Activated B cell treated with CpG ODN at 0.5 μM for 24 hours (primary cell): ENCODE measurements at regions of chr12 and their contacts with region 1.

Region 1: GRCh38 chr12:110449799-110450497 is at the start of gene ARPC3:
- DNase-seq: peak; percentile 92
- ATAC-seq: peak; percentile 92
- H3K4me3 Mint-ChIP-seq: peak within 1 kb of the TSS; percentile 100
- H3K27ac Mint-ChIP-seq: peak within 1 kb of the TSS; percentile 100
- H3K4me1 Mint-ChIP-seq: peaks cover 48% of the 10 kb centered on the region
- H3K27me3 Mint-ChIP-seq: no peaks in the 10 kb centered on the region
- CTCF ChIP-seq: no peak
- total RNA-seq, gene ARPC3: 435 and 459 TPM in 2 replicates

Region 2: DNA sequence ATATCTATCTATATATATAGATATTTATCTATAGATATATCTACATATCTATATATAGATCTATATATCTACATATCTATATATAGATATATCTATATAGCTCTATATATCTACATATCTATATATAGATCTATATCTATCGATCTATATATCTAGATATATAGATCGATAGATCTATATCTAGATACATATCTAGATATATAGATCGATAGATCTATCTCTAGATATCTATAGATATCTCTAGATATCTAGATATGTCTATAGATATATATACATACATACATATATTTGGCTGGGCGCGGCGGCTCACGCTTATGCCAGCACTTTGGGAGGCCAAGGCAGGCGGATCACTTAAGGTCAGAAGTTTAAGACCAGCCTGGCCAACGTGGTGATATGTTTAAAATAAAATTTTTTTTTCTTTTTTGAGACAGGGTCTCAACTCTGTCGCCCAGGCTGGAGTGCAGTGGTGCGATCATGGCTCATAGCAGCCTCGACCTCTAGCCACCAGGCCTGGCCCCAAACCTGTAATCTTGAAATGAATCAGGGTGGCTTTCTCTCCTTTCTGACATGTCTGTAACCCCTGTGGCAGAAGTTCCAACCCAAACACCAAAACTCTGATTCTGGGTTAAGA is 17.9 kb before region 1 on chr12:
- CTCF ChIA-PET with region 1: interaction called, 11 read pairs
- POLR2A ChIA-PET with region 1: interaction called, 28 read pairs
- intact Hi-C with region 1: loop called (anchors 2 kb)
- DNase-seq: no peak
- ATAC-seq: no peak
- H3K4me3 Mint-ChIP-seq: no peak overlapping the region
- H3K27ac Mint-ChIP-seq: no peak overlapping the region
- H3K4me1 Mint-ChIP-seq: peaks cover 2% of the 10 kb centered on the region
- H3K27me3 Mint-ChIP-seq: no peaks in the 10 kb centered on the region
- CTCF ChIP-seq: no peak

Region 3: GRCh38 chr12:110508071-110508586 is 58.2 kb after region 1 on chr12:
- CTCF ChIA-PET with region 1: interaction called, 6 read pairs
- POLR2A ChIA-PET with region 1: interaction called, 6 read pairs
- intact Hi-C with region 1: loop called (anchors 1 kb)
- DNase-seq: no peak
- ATAC-seq: no peak
- H3K4me3 Mint-ChIP-seq: no peak overlapping the region
- H3K27ac Mint-ChIP-seq: no peak overlapping the region
- H3K4me1 Mint-ChIP-seq: peaks cover 2% of the 10 kb centered on the region
- H3K27me3 Mint-ChIP-seq: no peaks in the 10 kb centered on the region
- CTCF ChIP-seq: no peak

Region 4: DNA sequence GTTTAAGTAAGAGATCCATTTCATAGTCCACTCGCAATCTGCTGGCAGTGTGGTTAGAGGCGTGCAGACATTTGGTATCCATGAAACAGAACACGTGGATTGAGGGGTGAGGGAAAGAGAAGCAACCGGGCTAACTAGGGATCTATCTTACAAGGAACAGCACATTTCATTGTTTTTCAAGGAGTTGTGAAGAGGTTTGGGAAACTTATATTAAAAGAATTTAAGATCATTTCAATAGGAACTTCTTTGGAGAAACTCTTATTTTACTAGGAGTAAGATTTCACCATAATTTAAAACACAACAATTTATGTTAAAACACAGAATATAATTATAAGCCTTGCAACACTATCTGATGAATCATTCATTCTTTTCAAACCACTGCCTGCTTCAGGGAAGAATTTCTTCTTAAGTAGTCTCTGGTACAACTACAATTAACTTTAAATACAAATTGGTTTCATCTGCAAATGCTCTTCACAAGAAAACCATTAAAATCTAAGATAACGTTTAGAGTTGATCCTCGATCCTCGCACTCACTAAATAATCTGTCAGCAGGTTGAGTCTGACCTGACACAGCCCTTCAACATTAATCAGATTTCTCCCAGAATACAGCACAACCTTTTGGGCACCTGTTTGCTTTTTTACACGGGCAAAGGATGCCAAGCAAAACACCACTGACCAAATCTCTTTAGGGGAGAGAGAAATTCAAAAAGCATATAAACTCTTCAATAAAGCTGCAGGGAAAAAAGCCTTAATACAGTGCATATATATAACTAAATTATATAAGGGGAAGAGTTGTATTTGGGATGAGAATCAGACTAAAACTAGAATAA is 105.8 kb after region 1 on chr12:
- CTCF ChIA-PET with region 1: interaction called, 13 read pairs
- POLR2A ChIA-PET with region 1: interaction called, 4 read pairs
- intact Hi-C with region 1: loop called (anchors 1 kb)
- DNase-seq: no peak
- ATAC-seq: no peak
- H3K4me3 Mint-ChIP-seq: no peak overlapping the region
- H3K27ac Mint-ChIP-seq: no peak overlapping the region
- H3K4me1 Mint-ChIP-seq: peaks cover 63% of the 10 kb centered on the region
- H3K27me3 Mint-ChIP-seq: no peaks in the 10 kb centered on the region
- CTCF ChIP-seq: no peak

Region 5: DNA sequence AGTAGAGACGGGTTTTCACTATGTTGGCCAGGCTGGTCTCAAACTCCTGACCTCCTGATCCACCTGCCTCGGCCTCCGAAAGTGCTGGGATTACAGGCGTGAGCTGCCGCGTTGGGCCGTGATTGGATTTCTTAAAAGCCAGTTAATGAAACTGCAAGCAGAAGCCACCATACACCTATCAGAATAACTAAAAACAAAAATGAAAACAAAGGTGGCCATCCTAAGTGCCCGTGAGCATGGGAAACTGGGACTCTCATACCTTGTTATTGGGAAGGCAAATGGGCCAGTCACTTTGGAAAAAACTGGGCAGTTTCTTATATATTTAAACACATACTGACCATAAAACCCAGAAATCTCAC is 156.3 kb after region 1 on chr12:
- CTCF ChIA-PET with region 1: interaction called, 189 read pairs
- POLR2A ChIA-PET with region 1: interaction called, 90 read pairs
- intact Hi-C with region 1: loop called (anchors 1 kb)
- DNase-seq: no peak
- ATAC-seq: no peak
- H3K4me3 Mint-ChIP-seq: peak overlapping the region; percentile 85
- H3K27ac Mint-ChIP-seq: peak overlapping the region; percentile 94
- H3K4me1 Mint-ChIP-seq: peaks cover 84% of the 10 kb centered on the region
- H3K27me3 Mint-ChIP-seq: no peaks in the 10 kb centered on the region
- CTCF ChIP-seq: no peak

Region 6: DNA sequence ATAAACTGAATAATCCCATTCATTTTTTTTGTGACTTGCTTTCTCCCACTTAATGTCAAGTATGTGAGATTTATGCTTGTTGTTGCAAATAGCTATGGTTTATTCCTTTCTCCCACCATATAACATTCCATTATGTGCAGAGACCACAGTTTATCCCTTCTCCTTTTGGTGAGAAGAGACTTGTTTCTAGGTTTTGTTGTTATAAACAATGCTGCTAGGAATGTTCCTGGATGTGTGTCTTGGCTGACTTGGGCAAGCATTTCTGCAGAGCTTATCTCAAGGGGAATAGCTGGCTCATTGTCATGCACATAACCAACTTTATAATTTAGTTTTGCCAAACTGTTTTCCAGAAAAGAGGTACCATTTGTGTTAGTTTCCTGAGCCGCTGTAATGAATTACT is 340.4 kb after region 1 on chr12:
- CTCF ChIA-PET with region 1: no interaction called
- POLR2A ChIA-PET with region 1: no interaction called
- intact Hi-C with region 1: no loop called
- DNase-seq: no peak
- ATAC-seq: no peak
- H3K4me3 Mint-ChIP-seq: no peak overlapping the region
- H3K27ac Mint-ChIP-seq: no peak overlapping the region
- H3K4me1 Mint-ChIP-seq: no peaks in the 10 kb centered on the region
- H3K27me3 Mint-ChIP-seq: no peaks in the 10 kb centered on the region
- CTCF ChIP-seq: no peak

Region 7: GRCh38 chr12:110826592-110827200 is 376.7 kb after region 1 on chr12:
- CTCF ChIA-PET with region 1: interaction called, 34 read pairs
- POLR2A ChIA-PET with region 1: interaction called, 10 read pairs
- intact Hi-C with region 1: loop called (anchors 1 kb)
- DNase-seq: peak; percentile 74
- ATAC-seq: peak; percentile 99
- H3K4me3 Mint-ChIP-seq: peak overlapping the region; percentile 80
- H3K27ac Mint-ChIP-seq: peak overlapping the region; percentile 41
- H3K4me1 Mint-ChIP-seq: peaks cover 6% of the 10 kb centered on the region
- H3K27me3 Mint-ChIP-seq: peaks cover 4% of the 10 kb centered on the region
- CTCF ChIP-seq: no peak

Region 8: DNA sequence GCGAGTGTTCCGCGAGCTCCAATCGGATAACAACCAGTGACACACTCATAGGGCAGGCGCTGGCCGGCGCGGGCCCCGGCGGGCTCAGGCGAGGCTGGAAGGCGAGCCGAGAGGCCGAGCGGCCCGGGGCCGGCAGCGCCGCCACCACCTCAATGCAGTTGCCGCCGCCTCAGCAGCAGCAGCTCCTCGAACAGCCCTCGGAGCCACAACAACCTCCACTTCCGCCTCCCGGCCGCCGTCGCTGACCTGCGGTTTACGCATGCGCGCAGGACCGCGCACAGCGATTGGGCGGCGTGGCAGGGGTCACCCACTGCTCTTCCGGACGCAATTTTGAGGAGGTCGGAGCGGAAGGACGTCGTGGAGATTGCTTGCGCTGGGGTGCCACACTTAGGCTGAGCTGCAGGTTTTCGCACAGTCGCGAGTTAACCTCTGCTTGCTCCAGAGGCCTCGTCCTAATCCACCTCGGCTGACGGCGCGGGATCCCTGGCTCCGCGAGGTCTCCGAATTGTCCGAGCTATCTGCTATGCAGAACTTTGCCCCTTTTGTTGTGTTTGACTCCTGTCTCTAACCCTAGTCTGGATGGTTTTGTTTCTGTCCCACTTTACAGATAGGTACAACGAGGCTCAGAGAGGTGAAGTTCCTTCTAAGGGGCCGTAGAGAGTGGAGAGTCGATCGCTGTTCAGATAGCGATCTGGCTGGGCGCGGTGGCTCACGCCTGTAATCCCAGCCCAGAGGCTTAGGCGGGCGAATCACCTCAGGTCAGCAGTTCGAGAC is 1236.0 kb after region 1 on chr12 and contains the starts of genes ACAD10 and BRAP:
- CTCF ChIA-PET with region 1: no interaction called
- POLR2A ChIA-PET with region 1: interaction called, 11 read pairs
- intact Hi-C with region 1: no loop called
- DNase-seq: peak; percentile 95
- ATAC-seq: peak; percentile 95
- H3K4me3 Mint-ChIP-seq: peak within 1 kb of the TSS; percentile 93
- H3K27ac Mint-ChIP-seq: peak within 1 kb of the TSS; percentile 95
- H3K4me1 Mint-ChIP-seq: peaks cover 41% of the 10 kb centered on the region
- H3K27me3 Mint-ChIP-seq: no peaks in the 10 kb centered on the region
- CTCF ChIP-seq: no peak
- total RNA-seq, gene ACAD10: 33.3 and 45.1 TPM in 2 replicates
- total RNA-seq, gene BRAP: 24.1 and 24.2 TPM in 2 replicates